HepG2 (cell line): ENCODE measurements at regions of chr13 and their contacts with region 1.

Region 1: DNA sequence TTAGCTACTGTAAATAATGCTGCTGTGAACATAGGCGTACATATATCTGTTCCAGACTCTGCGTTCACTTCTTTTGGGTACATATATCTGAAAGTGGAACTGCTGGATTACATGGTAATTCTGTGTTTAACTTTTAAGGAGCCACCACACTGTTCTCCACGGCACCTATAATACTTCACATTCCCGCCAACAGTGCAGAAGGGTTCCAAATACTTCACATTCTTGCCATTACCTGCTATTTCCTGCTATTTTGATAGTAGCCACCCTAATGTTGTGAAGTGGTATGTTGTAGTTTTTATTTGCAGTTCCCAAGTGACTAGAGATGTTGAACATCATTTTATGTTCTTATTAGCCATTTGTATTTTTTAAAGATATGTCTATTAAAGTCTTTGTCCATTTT is 377.4 kb upstream of the SLC10A2 start:
- DNase-seq: no peak
- ATAC-seq: no peak
- H3K4me3 ChIP-seq: no peak overlapping the region
- H3K27ac ChIP-seq: no peak overlapping the region
- H3K4me1 ChIP-seq: no peaks in the 10 kb centered on the region
- H3K27me3 ChIP-seq: no peaks in the 10 kb centered on the region
- CTCF ChIP-seq: no peak
- EP300 ChIP-seq: no peak
- POLR2A ChIP-seq: no peak
- RAD21 ChIP-seq: no peak

Region 2: GRCh38 chr13:104671901-104672300 is 1228.3 kb after region 1 on chr13:
- CTCF ChIA-PET with region 1: no interaction called
- POLR2A ChIA-PET with region 1: no interaction called
- in situ Hi-C with region 1: no loop called
- intact Hi-C with region 1: no loop called
- DNase-seq: no peak
- ATAC-seq: no peak
- H3K4me3 ChIP-seq: no peak overlapping the region
- H3K27ac ChIP-seq: no peak overlapping the region
- H3K4me1 ChIP-seq: no peaks in the 10 kb centered on the region
- H3K27me3 ChIP-seq: no peaks in the 10 kb centered on the region
- CTCF ChIP-seq: no peak
- EP300 ChIP-seq: no peak
- POLR2A ChIP-seq: no peak
- RAD21 ChIP-seq: no peak

Region 3: DNA sequence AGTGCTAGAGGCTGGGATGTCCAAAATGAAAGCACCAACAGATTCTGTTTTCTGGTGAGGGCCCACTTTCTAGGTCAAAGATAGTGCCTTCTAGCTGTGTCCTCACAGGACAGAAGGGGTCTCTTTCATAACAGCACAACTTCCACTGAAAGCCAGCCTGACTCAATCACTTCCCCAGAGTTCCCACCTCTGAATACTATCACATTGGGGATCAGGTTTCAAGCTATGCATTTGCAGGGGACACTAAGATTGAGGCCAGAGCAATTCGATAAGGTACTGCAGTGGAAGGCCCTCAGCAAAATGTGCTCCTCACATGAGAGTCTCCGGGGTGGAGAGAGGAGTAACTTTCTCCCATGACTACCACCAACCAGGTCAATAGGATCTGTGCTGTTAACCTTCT is 1590.4 kb after region 1 on chr13:
- CTCF ChIA-PET with region 1: no interaction called
- POLR2A ChIA-PET with region 1: no interaction called
- in situ Hi-C with region 1: no loop called
- intact Hi-C with region 1: loop called (anchors 5 kb)
- DNase-seq: no peak
- ATAC-seq: no peak
- H3K4me3 ChIP-seq: no peak overlapping the region
- H3K27ac ChIP-seq: no peak overlapping the region
- H3K4me1 ChIP-seq: no peaks in the 10 kb centered on the region
- H3K27me3 ChIP-seq: no peaks in the 10 kb centered on the region
- CTCF ChIP-seq: no peak
- EP300 ChIP-seq: no peak
- POLR2A ChIP-seq: no peak
- RAD21 ChIP-seq: no peak